ENCODE measurements at regions of chr1 and their contacts with region 1.

Region 1: GRCh38 chr1:235971571-235972310 is 93.1 kb downstream of the NID1 start:
- DNase-seq: peak; percentile 78 to 84 (median 82)
- H3K4me3 ChIP-seq: peak overlapping the region in 1 of 2 donors; percentile 28
- H3K4me3 Mint-ChIP-seq: peak overlapping the region; percentile 16 to 79 (median 56)
- H3K27ac ChIP-seq: no peak overlapping the region
- H3K27ac Mint-ChIP-seq: peak overlapping the region; percentile 12 to 79 (median 74)
- H3K4me1 ChIP-seq: peaks cover 11% of the 10 kb centered on the region
- H3K4me1 Mint-ChIP-seq: peaks cover 6 to 17% (median 15%) of the 10 kb centered on the region in 4 donors
- H3K27me3 ChIP-seq: no peaks in the 10 kb centered on the region
- H3K27me3 Mint-ChIP-seq: no peaks in the 10 kb centered on the region

Region 2: GRCh38 chr1:235504496-235505222 is 467.1 kb before region 1 on chr1:
- CTCF ChIA-PET with region 1: interaction called, 10 read pairs
- POLR2A ChIA-PET with region 1: no interaction called
- intact Hi-C with region 1: no loop called
- DNase-seq: peak; percentile 97 to 99 (median 98)
- H3K4me3 ChIP-seq: peak overlapping the region; percentile 74
- H3K4me3 Mint-ChIP-seq: peak overlapping the region; percentile 92 to 98 (median 96)
- H3K27ac ChIP-seq: peak overlapping the region; percentile 85
- H3K27ac Mint-ChIP-seq: peak overlapping the region; percentile 97 to 100 (median 98)
- H3K4me1 ChIP-seq: peaks cover 20% of the 10 kb centered on the region
- H3K4me1 Mint-ChIP-seq: peaks cover 12 to 32% (median 19%) of the 10 kb centered on the region in 4 donors
- H3K27me3 ChIP-seq: no peaks in the 10 kb centered on the region
- H3K27me3 Mint-ChIP-seq: peaks cover 0 to 1% of the 10 kb centered on the region in 2 donors

Region 3: GRCh38 chr1:235791532-235792060 is 180.1 kb before region 1 on chr1:
- CTCF ChIA-PET with region 1: interaction called, 12 read pairs
- POLR2A ChIA-PET with region 1: no interaction called
- intact Hi-C with region 1: no loop called
- DNase-seq: no peak
- H3K4me3 ChIP-seq: no peak overlapping the region
- H3K4me3 Mint-ChIP-seq: no peak overlapping the region
- H3K27ac ChIP-seq: no peak overlapping the region
- H3K27ac Mint-ChIP-seq: peak overlapping the region in 1 of 7 donors; percentile 25
- H3K4me1 ChIP-seq: no peaks in the 10 kb centered on the region
- H3K4me1 Mint-ChIP-seq: no peaks in the 10 kb centered on the region
- H3K27me3 ChIP-seq: no peaks in the 10 kb centered on the region
- H3K27me3 Mint-ChIP-seq: no peaks in the 10 kb centered on the region

Region 4: GRCh38 chr1:235854347-235854746 is 117.4 kb before region 1 on chr1:
- CTCF ChIA-PET with region 1: interaction called, 10 read pairs
- POLR2A ChIA-PET with region 1: no interaction called
- intact Hi-C with region 1: no loop called
- DNase-seq: no peak
- H3K4me3 ChIP-seq: no peak overlapping the region
- H3K4me3 Mint-ChIP-seq: no peak overlapping the region
- H3K27ac ChIP-seq: no peak overlapping the region
- H3K27ac Mint-ChIP-seq: peak overlapping the region in 1 of 7 donors; percentile 54
- H3K4me1 ChIP-seq: peaks cover 10% of the 10 kb centered on the region
- H3K4me1 Mint-ChIP-seq: peaks cover 23 to 45% (median 30%) of the 10 kb centered on the region in 4 donors
- H3K27me3 ChIP-seq: no peaks in the 10 kb centered on the region
- H3K27me3 Mint-ChIP-seq: no peaks in the 10 kb centered on the region

Region 5: GRCh38 chr1:235888119-235888643 is 83.6 kb before region 1 on chr1:
- CTCF ChIA-PET with region 1: interaction called, 18 read pairs
- POLR2A ChIA-PET with region 1: no interaction called
- intact Hi-C with region 1: no loop called
- DNase-seq: peak; percentile 43 to 57 (median 51)
- H3K4me3 ChIP-seq: peak overlapping the region in 1 of 2 donors; percentile 51
- H3K4me3 Mint-ChIP-seq: peak overlapping the region; percentile 86 to 94 (median 89)
- H3K27ac ChIP-seq: peak overlapping the region; percentile 66
- H3K27ac Mint-ChIP-seq: peak overlapping the region; percentile 89 to 99 (median 96)
- H3K4me1 ChIP-seq: peaks cover 18% of the 10 kb centered on the region
- H3K4me1 Mint-ChIP-seq: peaks cover 16 to 32% (median 21%) of the 10 kb centered on the region in 4 donors
- H3K27me3 ChIP-seq: no peaks in the 10 kb centered on the region
- H3K27me3 Mint-ChIP-seq: no peaks in the 10 kb centered on the region

Region 6: GRCh38 chr1:235954306-235955283 is 17.1 kb before region 1 on chr1:
- CTCF ChIA-PET with region 1: interaction called, 73 read pairs
- POLR2A ChIA-PET with region 1: interaction called, 11 read pairs
- intact Hi-C with region 1: no loop called
- DNase-seq: peak; percentile 34 to 65 (median 43)
- H3K4me3 ChIP-seq: no peak overlapping the region
- H3K4me3 Mint-ChIP-seq: peak overlapping the region; percentile 15 to 69 (median 52)
- H3K27ac ChIP-seq: no peak overlapping the region
- H3K27ac Mint-ChIP-seq: peak overlapping the region; percentile 67 to 85 (median 79)
- H3K4me1 ChIP-seq: peaks cover 34% of the 10 kb centered on the region
- H3K4me1 Mint-ChIP-seq: peaks cover 33 to 39% (median 36%) of the 10 kb centered on the region in 4 donors
- H3K27me3 ChIP-seq: no peaks in the 10 kb centered on the region
- H3K27me3 Mint-ChIP-seq: no peaks in the 10 kb centered on the region